ENCODE measurements at regions of chr15 and their contacts with region 1.

Region 1: DNA sequence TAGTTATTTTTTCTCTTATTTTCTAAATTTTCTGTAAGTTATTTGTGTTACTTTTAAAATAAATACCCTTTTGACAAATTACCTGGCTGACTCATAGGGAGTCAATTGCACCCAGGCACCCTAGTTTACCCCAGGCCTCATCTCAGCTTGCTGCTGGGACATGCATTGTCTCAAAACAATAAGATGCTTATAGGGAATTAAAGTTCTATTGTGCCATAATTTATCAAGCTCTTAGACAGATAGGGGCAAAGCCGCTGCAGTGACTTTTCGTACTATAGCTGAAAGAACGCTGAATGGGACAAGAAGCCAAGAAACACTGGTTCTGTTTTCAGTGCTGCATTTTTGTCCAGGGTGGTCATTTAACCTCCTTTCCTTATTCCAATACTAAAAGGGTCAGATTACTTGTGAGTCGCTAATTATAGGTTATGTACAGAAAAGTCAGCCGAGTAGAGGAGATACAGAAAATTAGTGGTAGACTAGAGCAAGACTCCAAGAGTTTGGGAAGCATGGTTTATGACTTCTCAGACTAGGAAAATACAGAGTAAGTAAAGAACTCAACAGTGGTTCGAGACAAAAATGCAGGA is 50.3 kb downstream of the EXD1 start:
- DNase-seq: no peak
- H3K4me3 ChIP-seq: no peak overlapping the region
- H3K4me3 Mint-ChIP-seq: no peak overlapping the region
- H3K27ac ChIP-seq: no peak overlapping the region
- H3K27ac Mint-ChIP-seq: no peak overlapping the region
- H3K4me1 ChIP-seq: peaks cover 4 to 5% of the 10 kb centered on the region in 2 donors
- H3K4me1 Mint-ChIP-seq: peaks cover 7% of the 10 kb centered on the region
- H3K27me3 ChIP-seq: no peaks in the 10 kb centered on the region
- H3K27me3 Mint-ChIP-seq: peaks cover 2 to 6% (median 5%) of the 10 kb centered on the region in 3 donors
- CTCF ChIP-seq: no peak

Region 2: DNA sequence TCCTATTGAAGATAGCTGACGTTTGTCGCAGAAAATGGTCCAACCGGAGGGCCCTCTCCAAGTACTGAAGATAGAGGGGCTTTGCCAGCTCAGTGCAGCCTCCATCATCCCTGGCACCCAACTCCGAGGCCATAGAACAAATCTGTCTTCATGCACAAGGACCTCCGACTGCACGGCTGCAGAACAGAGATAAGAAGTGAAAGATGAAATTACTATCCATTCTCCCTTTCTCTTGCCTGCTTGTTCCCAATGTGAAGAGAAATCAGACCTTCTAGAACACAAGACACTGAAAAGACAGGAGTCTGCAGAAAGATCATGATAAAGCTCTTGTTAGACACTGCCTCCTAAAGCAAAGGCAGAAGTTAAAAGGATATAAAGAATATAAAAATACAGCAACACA is 84.1 kb before region 1 on chr15:
- intact Hi-C with region 1: loop called (anchors 10 kb)
- DNase-seq: no peak
- H3K4me3 ChIP-seq: no peak overlapping the region
- H3K4me3 Mint-ChIP-seq: no peak overlapping the region
- H3K27ac ChIP-seq: no peak overlapping the region
- H3K27ac Mint-ChIP-seq: no peak overlapping the region
- H3K4me1 ChIP-seq: no peaks in the 10 kb centered on the region
- H3K4me1 Mint-ChIP-seq: no peaks in the 10 kb centered on the region
- H3K27me3 ChIP-seq: no peaks in the 10 kb centered on the region
- H3K27me3 Mint-ChIP-seq: no peaks in the 10 kb centered on the region
- CTCF ChIP-seq: no peak

Region 3: GRCh38 chr15:41104234-41104633 is 76.1 kb before region 1 on chr15:
- intact Hi-C with region 1: loop called (anchors 10 kb)
- DNase-seq: no peak
- H3K4me3 ChIP-seq: no peak overlapping the region
- H3K4me3 Mint-ChIP-seq: no peak overlapping the region
- H3K27ac ChIP-seq: no peak overlapping the region
- H3K27ac Mint-ChIP-seq: peak overlapping the region in 2 of 7 donors; percentile 55 to 60
- H3K4me1 ChIP-seq: no peaks in the 10 kb centered on the region
- H3K4me1 Mint-ChIP-seq: peaks cover 8% of the 10 kb centered on the region
- H3K27me3 ChIP-seq: no peaks in the 10 kb centered on the region
- H3K27me3 Mint-ChIP-seq: no peaks in the 10 kb centered on the region
- CTCF ChIP-seq: no peak

Measured in CD14-positive monocyte (primary cell).